ENCODE measurements at regions of chr1 and their contacts with region 1.

Region 1: DNA sequence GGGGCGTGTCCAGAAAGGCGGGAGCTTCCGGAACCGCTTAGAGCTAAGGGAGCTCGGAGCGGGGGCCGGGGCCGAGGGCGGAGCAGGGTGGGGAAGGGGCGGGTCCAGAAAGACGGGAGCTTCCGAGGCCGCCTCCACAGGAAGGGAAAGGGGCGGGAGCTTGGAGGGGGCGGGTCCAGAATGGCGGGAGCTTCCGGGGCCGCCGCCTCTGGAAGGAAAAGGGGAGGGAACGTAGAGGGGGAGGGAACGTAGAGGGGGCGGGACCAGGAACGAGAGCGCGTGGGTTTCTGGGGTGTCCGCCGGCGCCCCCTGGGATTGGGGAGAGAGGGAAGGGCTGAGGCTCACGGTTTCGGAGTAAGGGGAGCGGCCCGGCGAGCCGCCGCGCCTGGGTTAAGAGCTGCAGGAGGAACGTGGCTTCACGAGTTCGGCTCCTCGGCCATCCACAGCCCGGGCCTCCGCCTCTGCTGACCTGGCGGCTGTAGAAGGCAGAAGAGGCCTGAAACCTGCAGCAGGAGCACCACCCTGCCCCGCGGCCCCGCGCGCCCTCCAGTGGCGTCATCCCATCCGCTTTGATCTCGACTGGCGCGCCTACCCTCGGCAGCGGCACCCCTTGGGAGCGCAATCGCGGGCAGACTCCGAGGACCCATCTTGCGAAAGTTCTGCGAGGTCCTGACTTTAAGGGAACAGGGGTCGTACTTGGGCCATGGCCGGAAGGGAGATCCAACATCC is 22.9 kb upstream of the HPDL start:
- DNase-seq: peak; percentile 91 to 94
- H3K4me3 ChIP-seq: peak overlapping the region; percentile 63 to 76 (median 74)
- H3K27ac ChIP-seq: peak overlapping the region; percentile 93
- H3K4me1 ChIP-seq: peaks cover 13 to 24% (median 15%) of the 10 kb centered on the region in 4 experiments
- H3K27me3 ChIP-seq: no peaks in the 10 kb centered on the region
- CTCF ChIP-seq: peak; percentile 61 to 85 (median 74)
- EP300 ChIP-seq: no peak
- POLR2A ChIP-seq: peak; percentile 91 to 97
- RAD21 ChIP-seq: peak; percentile 58 to 64

Region 2: GRCh38 chr1:45205910-45206721 is 97.6 kb before region 1 on chr1 and contains the start of gene ZSWIM5:
- CTCF ChIA-PET with region 1: interaction called, 10 read pairs
- POLR2A ChIA-PET with region 1: interaction called, 6 read pairs
- DNase-seq: peak in 1 of 2 experiments; percentile 83
- H3K4me3 ChIP-seq: peak within 1 kb of the TSS; percentile 71 to 92 (median 88)
- H3K27ac ChIP-seq: peak within 1 kb of the TSS; percentile 61; the same call in 1 of the 2 replicates
- H3K4me1 ChIP-seq: no peaks in the 10 kb centered on the region; a peak in 1 of 7 replicates
- H3K27me3 ChIP-seq: peaks cover 2 to 25% (median 17%) of the 10 kb centered on the region in 4 experiments
- CTCF ChIP-seq: no peak
- EP300 ChIP-seq: no peak
- POLR2A ChIP-seq: no peak
- RAD21 ChIP-seq: no peak
- total RNA-seq, gene ZSWIM5: 2.4 and 2.5 TPM in 2 replicates

Region 3: DNA sequence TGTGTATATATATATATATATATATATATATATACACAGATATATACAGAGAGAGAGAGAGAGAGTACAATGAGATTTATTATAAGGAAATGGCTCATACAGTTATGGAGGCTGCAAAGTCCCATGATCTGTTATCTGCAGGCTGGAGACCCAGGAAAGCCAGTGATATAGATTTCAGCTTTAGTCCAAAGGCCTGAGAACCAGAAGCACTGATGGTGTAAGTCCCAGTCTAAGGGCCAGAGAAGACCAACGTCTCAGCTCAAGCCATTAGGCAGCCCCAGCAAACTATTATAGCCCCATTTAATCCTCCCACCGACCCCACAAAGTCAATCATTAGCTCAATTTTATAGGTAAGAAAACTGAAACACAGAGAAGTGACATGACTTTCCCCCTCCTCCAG is 12.0 kb before region 1 on chr1:
- CTCF ChIA-PET with region 1: interaction called, 11 read pairs
- POLR2A ChIA-PET with region 1: no interaction called
- DNase-seq: no peak
- H3K4me3 ChIP-seq: no peak overlapping the region
- H3K27ac ChIP-seq: no peak overlapping the region
- H3K4me1 ChIP-seq: no peaks in the 10 kb centered on the region
- H3K27me3 ChIP-seq: no peaks in the 10 kb centered on the region
- CTCF ChIP-seq: no peak
- EP300 ChIP-seq: no peak
- POLR2A ChIP-seq: no peak
- RAD21 ChIP-seq: no peak

Region 4: DNA sequence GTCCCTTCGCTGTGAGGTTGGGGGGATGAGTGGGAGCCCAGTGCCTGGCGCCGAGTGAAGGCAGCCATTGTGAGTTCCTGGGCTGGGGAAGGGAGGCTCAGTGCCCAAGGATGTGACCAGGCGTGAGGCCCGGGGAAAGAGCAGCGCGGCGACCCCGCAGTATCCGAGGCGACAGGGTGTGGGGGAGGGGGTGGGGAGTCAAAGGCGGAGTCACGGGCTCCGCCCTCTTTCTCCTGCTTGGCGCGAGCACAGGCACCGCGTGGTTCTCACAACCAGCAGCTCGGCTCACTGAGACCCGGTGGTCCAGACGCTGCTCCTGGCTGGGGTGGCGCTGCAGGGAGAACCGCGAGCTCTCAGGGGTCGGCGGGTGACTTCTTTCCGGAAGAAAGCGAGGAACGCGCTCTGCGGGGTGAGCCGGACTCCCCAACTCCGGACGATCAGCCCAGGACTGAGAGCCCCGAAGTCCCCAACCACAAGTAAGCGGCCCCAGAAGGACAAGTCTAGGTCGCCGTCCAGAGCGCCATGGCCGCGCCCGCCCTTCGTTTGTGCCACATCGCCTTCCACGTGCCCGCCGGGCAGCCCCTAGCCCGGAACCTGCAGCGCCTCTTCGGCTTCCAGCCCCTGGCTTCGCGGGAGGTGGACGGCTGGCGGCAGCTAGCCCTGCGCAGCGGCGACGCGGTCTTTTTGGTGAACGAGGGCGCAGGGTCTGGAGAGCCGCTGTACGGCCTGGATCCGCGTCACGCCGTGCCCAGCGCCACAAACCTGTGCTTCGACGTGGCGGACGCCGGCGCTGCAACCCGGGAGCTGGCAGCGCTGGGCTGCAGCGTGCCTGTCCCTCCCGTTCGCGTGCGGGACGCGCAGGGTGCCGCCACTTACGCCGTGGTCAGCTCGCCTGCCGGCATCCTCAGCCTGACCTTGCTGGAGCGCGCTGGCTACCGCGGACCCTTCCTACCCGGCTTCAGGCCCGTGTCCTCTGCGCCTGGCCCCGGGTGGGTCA is 23.2 kb after region 1 on chr1 and contains the start of gene HPDL:
- CTCF ChIA-PET with region 1: interaction called, 24 read pairs
- POLR2A ChIA-PET with region 1: interaction called, 194 read pairs
- DNase-seq: peak; percentile 64 to 85
- H3K4me3 ChIP-seq: peak within 1 kb of the TSS; percentile 61 to 69 (median 64)
- H3K27ac ChIP-seq: peak within 1 kb of the TSS; percentile 65; the same call in 1 of the 2 replicates
- H3K4me1 ChIP-seq: peaks cover 8 to 24% (median 14%) of the 10 kb centered on the region in 4 experiments; a peak in 6 of 7 replicates
- H3K27me3 ChIP-seq: no peaks in the 10 kb centered on the region
- CTCF ChIP-seq: no peak
- EP300 ChIP-seq: peak in 1 of 2 experiments; percentile 15; a peak in 1 of 3 replicates
- POLR2A ChIP-seq: peak; percentile 77 to 100
- RAD21 ChIP-seq: peak; percentile 14 to 23; a peak in 1 of 4 replicates
- total RNA-seq, gene HPDL: 58.5 and 60.6 TPM in 2 replicates

Region 5: DNA sequence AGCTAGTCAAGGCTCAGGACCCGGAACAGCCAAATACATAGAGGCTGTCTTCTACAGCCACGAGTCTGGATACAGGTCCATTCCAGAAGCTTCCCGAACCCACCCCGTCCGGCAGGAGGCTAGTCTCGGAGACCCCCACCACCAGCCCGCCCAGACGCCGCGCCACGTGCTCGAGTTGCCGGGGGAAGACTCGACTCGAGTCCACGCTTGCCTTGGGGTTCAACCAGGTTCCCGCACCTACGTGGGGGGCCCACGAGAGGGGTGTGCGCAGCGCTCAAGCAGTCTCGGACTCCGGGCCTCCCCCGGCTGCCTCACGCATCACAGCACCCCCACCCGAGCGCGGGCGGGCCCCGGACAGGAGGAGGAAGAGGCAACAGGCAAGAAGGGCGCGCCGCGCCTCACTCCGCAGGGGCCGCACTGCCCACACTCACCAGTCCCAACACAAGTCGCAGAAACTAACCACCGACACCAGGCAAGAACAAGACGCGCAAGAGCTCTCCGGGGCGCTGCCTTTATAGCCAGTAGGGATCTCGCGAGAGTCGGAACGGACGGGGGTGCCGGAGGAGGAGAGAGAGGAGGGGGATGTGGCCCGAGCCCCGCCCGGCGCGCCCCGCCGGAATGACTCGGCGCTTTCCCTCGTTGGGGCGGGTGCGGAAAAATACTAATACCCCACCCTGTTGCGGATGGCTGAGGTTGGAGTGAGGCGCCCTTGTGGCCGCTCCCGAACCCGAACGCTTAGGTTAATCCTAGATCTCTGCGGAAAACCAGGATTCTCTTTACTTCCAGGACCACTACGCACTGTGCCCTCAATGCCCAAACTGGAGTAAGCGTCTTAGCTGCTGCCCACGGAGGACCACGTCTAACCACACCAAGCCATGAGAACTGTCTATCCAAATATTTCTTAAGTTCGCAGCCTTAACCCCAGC is 217.9 kb after region 1 on chr1 and contains the start of gene PRDX1:
- CTCF ChIA-PET with region 1: no interaction called
- POLR2A ChIA-PET with region 1: interaction called, 15 read pairs
- DNase-seq: peak; percentile 91 to 99
- H3K4me3 ChIP-seq: peak within 1 kb of the TSS; percentile 96 to 100 (median 98)
- H3K27ac ChIP-seq: peak within 1 kb of the TSS; percentile 91
- H3K4me1 ChIP-seq: peaks cover 2 to 12% (median 5%) of the 10 kb centered on the region in 4 experiments; a peak in 5 of 7 replicates
- H3K27me3 ChIP-seq: no peaks in the 10 kb centered on the region
- CTCF ChIP-seq: peak in 1 of 3 experiments; percentile 11; a peak in 1 of 4 replicates
- EP300 ChIP-seq: peak in 1 of 2 experiments; percentile 82; a peak in 1 of 3 replicates
- POLR2A ChIP-seq: peak; percentile 100
- RAD21 ChIP-seq: no peak; a peak in 1 of 4 replicates
- total RNA-seq, gene PRDX1: 1,354 and 1,418 TPM in 2 replicates

Measured in H1 (cell line).